Common myeloid progenitor, CD34-positive (primary cell): ENCODE measurements at regions of chr1 and their contacts with region 1.

Region 1: DNA sequence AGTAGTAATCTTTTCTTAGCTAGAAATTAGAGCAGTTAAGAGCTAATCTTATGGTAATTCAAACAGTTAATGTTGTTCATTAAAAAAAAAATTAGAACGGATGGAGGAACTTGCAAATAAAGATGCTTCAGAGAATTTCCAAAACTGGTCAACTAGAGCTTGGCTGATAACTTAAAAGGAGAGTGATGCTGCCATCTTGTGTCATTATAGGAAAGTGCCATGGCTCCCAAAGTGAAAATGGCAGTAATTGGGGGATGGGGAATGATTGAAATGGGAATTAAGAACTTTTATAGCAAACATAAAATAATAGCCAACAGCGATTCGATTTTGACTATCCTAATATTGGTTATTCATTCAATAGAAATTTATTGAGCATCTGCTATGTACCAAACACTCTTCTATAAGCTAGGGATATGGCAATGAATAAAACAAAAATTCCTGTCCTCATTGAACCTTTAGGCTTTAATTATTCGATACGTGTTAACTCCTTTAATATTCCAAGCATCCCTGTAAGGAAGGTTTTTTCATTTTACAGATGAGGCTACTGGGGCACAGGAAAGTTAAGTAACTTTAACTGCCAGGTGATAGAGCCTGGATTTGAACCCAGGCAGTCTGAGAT is 5.7 kb upstream of the PLPP3 start:
- DNase-seq: peak; percentile 61 to 74 (median 68)
- H3K4me3 ChIP-seq: no peak overlapping the region
- H3K27ac ChIP-seq: no peak overlapping the region
- H3K4me1 ChIP-seq: peaks cover 0 to 3% (median 0%) of the 10 kb centered on the region in 4 experiments
- H3K27me3 ChIP-seq: no peaks in the 10 kb centered on the region

Region 2: DNA sequence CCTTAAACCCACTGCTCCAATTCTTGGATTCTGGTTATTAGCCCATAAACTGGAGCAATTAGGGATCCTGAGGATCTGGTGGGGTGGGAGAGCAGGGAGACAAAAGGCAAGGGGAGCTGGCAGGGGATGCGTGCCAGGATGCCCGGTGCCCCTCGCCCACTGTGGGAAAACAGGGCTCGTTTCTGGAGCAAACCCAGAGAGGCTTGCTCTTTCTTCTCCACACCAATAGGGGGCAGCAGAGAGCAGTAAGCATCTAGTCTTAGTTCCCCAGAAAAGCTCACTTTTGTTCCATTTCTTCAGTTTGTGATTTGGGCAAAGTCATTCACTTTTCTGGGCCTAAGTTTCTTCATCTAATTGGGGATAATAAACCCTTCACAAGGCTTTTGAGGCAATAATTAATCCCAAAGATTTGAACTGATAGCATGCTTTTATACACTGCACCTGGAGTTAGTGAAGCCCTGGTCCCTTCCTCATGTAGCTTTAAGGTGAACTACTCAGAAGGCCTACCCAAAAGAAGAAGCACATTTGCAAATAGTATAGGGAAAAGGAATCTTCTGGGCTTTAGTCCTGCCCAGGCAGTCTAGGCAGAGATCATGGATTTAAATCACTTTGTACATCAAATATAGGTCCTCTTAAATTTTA is 1209.3 kb before region 1 on chr1:
- CTCF ChIA-PET with region 1: interaction called, 12 read pairs
- POLR2A ChIA-PET with region 1: no interaction called
- DNase-seq: peak; percentile 22 to 67 (median 59)
- H3K4me3 ChIP-seq: no peak overlapping the region
- H3K27ac ChIP-seq: no peak overlapping the region
- H3K4me1 ChIP-seq: peaks cover 0 to 2% (median 0%) of the 10 kb centered on the region in 4 experiments
- H3K27me3 ChIP-seq: no peaks in the 10 kb centered on the region

Region 3: DNA sequence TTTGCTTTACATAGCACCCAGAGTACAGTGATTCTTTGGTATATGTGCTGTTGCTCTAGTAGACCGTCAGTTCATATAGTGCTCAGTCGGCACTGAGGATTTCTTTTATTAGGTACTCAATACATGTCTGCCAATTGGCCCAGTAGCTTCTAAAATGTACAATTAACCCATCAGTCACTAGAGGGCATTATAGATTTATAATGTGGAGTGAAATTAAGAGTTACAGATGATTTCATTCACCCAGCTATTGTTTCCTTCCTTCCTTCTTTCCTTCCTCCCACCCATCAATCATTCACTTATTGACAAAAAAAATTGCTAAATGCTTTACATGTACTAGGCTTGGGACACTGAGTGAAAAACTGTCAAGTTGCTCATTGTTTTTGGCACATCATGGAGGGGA is 1106.3 kb before region 1 on chr1:
- CTCF ChIA-PET with region 1: interaction called, 32 read pairs
- POLR2A ChIA-PET with region 1: no interaction called
- DNase-seq: peak; percentile 12 to 28 (median 18)
- H3K4me3 ChIP-seq: no peak overlapping the region
- H3K27ac ChIP-seq: no peak overlapping the region
- H3K4me1 ChIP-seq: peaks cover 0 to 18% (median 6%) of the 10 kb centered on the region in 4 experiments
- H3K27me3 ChIP-seq: no peaks in the 10 kb centered on the region

Region 4: GRCh38 chr1:56409094-56409691 is 175.8 kb before region 1 on chr1:
- CTCF ChIA-PET with region 1: interaction called, 26 read pairs
- POLR2A ChIA-PET with region 1: no interaction called
- DNase-seq: peak; percentile 22 to 36 (median 31)
- H3K4me3 ChIP-seq: no peak overlapping the region
- H3K27ac ChIP-seq: no peak overlapping the region
- H3K4me1 ChIP-seq: no peaks in the 10 kb centered on the region
- H3K27me3 ChIP-seq: no peaks in the 10 kb centered on the region

Region 5: GRCh38 chr1:56533621-56534020 is 51.4 kb before region 1 on chr1:
- CTCF ChIA-PET with region 1: no interaction called
- POLR2A ChIA-PET with region 1: no interaction called
- DNase-seq: no peak
- H3K4me3 ChIP-seq: no peak overlapping the region
- H3K27ac ChIP-seq: no peak overlapping the region
- H3K4me1 ChIP-seq: no peaks in the 10 kb centered on the region
- H3K27me3 ChIP-seq: peaks cover 0 to 2% (median 0%) of the 10 kb centered on the region in 5 experiments

Region 6: GRCh38 chr1:56547953-56548352 is 37.1 kb before region 1 on chr1:
- CTCF ChIA-PET with region 1: no interaction called
- POLR2A ChIA-PET with region 1: no interaction called
- DNase-seq: no peak
- H3K4me3 ChIP-seq: no peak overlapping the region
- H3K27ac ChIP-seq: no peak overlapping the region
- H3K4me1 ChIP-seq: no peaks in the 10 kb centered on the region
- H3K27me3 ChIP-seq: no peaks in the 10 kb centered on the region